CD4-positive, alpha-beta T cell (primary cell): ENCODE measurements at regions of chr15 and their contacts with region 1.

Region 1: GRCh38 chr15:88246666-88247446 is 9.7 kb downstream of the NTRK3 start:
- DNase-seq: peak; percentile 42 to 83 (median 64)
- ATAC-seq: peak; percentile 90
- H3K4me3 ChIP-seq: no peak overlapping the region
- H3K4me3 Mint-ChIP-seq: no peak overlapping the region
- H3K27ac ChIP-seq: no peak overlapping the region
- H3K27ac Mint-ChIP-seq: no peak overlapping the region
- H3K4me1 ChIP-seq: peaks cover 7% of the 10 kb centered on the region
- H3K4me1 Mint-ChIP-seq: peaks cover 8% of the 10 kb centered on the region
- H3K27me3 ChIP-seq: peaks cover 0 to 5% of the 10 kb centered on the region in 2 experiments
- H3K27me3 Mint-ChIP-seq: peaks cover 18% of the 10 kb centered on the region
- CTCF ChIP-seq: peak; percentile 88

Region 2: GRCh38 chr15:86624261-86625036 is 1622.4 kb before region 1 on chr15:
- CTCF ChIA-PET with region 1: no interaction called
- POLR2A ChIA-PET with region 1: no interaction called
- intact Hi-C with region 1: loop called in 1 of 2 experiments (anchors 10 kb)
- DNase-seq: peak; percentile 1 to 68 (median 42)
- ATAC-seq: peak; percentile 58
- H3K4me3 ChIP-seq: no peak overlapping the region
- H3K4me3 Mint-ChIP-seq: no peak overlapping the region
- H3K27ac ChIP-seq: no peak overlapping the region
- H3K27ac Mint-ChIP-seq: no peak overlapping the region
- H3K4me1 ChIP-seq: peaks cover 15% of the 10 kb centered on the region
- H3K4me1 Mint-ChIP-seq: peaks cover 38% of the 10 kb centered on the region
- H3K27me3 ChIP-seq: no peaks in the 10 kb centered on the region
- H3K27me3 Mint-ChIP-seq: no peaks in the 10 kb centered on the region
- CTCF ChIP-seq: no peak